ENCODE measurements at regions of chr11 and their contacts with region 1.

Region 1: GRCh38 chr11:26078217-26078821 is 253.6 kb upstream of the ANO3 start:
- DNase-seq: peak; percentile 34
- ATAC-seq: peak; percentile 44; the same call in 1 of the 2 replicates
- H3K4me3 ChIP-seq: no peak overlapping the region
- H3K27ac ChIP-seq: no peak overlapping the region
- H3K4me1 ChIP-seq: no peaks in the 10 kb centered on the region
- H3K27me3 ChIP-seq: no peaks in the 10 kb centered on the region
- CTCF ChIP-seq: no peak
- POLR2A ChIP-seq: no peak
- RAD21 ChIP-seq: no peak

Region 2: GRCh38 chr11:26507229-26507628 is 428.9 kb after region 1 on chr11:
- CTCF ChIA-PET with region 1: no interaction called
- POLR2A ChIA-PET with region 1: interaction called, 16 read pairs
- dilution Hi-C with region 1: no loop called
- in situ Hi-C with region 1: no loop called
- intact Hi-C with region 1: no loop called
- DNase-seq: no peak
- ATAC-seq: no peak
- H3K4me3 ChIP-seq: no peak overlapping the region
- H3K27ac ChIP-seq: no peak overlapping the region
- H3K4me1 ChIP-seq: no peaks in the 10 kb centered on the region
- H3K27me3 ChIP-seq: no peaks in the 10 kb centered on the region
- CTCF ChIP-seq: no peak
- POLR2A ChIP-seq: no peak
- RAD21 ChIP-seq: no peak

Measured in IMR-90 (cell line).